ENCODE measurements at regions of chr22 and their contacts with region 1.

Region 1: GRCh38 chr22:50562523-50563412 is at the start of gene SYCE3:
- DNase-seq: peak; percentile 98
- H3K4me3 Mint-ChIP-seq: peak within 1 kb of the TSS; percentile 90
- H3K27ac Mint-ChIP-seq: peak within 1 kb of the TSS; percentile 60
- H3K4me1 Mint-ChIP-seq: peaks cover 15% of the 10 kb centered on the region
- H3K27me3 Mint-ChIP-seq: no peaks in the 10 kb centered on the region
- total RNA-seq, gene SYCE3: 0.87 to 1.0 TPM

Region 2: DNA sequence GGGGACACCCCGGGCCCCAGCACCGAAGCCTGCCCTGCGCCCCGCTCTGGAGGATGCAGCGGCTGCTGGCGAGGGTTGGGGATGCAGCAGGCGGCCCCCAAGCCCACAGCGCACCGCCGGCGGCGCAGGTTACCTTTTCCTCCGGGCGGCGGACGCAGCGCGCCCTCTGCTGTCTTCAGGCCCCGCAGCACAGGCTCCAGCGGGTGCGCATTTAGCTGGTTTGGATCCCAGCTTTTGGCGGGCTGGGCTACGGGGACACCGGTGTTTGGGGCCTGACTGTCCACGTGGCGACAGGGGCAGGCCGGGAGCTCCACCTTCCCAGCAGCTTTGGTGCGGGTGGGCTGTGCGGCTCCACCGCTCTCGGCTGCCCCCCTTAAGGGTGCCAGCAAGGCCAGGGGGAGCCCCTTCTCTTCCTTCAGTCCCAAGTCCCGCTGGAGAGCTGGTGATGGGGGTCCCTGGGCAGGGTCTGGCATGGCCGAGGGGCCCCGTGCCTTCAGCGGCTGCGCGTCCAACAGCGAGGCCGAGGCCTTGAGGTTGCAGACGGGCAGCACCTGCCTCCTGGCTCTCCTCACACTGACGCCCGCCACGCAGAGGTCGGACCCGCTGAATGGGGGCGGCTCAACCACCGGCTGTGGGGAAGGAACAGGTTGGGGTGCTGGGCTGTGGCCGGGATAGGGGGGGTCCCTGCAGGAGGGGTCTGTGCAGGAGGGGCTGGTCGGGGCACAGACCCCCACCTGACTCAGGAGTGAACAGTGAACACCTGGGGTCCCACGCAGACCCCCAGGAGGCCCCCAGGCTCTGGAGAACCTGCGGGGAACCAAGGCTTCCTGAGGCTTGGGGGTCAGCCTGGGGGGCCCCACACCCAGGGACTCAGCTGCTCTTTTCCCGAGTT is 532.2 kb before region 1 on chr22:
- CTCF ChIA-PET with region 1: no interaction called
- POLR2A ChIA-PET with region 1: no interaction called
- intact Hi-C with region 1: no loop called
- DNase-seq: peak; percentile 94
- H3K4me3 Mint-ChIP-seq: no peak overlapping the region
- H3K27ac Mint-ChIP-seq: no peak overlapping the region
- H3K4me1 Mint-ChIP-seq: peaks cover 25% of the 10 kb centered on the region
- H3K27me3 Mint-ChIP-seq: peaks cover 16% of the 10 kb centered on the region

Region 3: GRCh38 chr22:50406416-50407170 is 156.2 kb before region 1 on chr22:
- CTCF ChIA-PET with region 1: no interaction called
- POLR2A ChIA-PET with region 1: no interaction called
- intact Hi-C with region 1: no loop called
- DNase-seq: no peak
- H3K4me3 Mint-ChIP-seq: no peak overlapping the region
- H3K27ac Mint-ChIP-seq: peak overlapping the region; percentile 32
- H3K4me1 Mint-ChIP-seq: no peaks in the 10 kb centered on the region
- H3K27me3 Mint-ChIP-seq: no peaks in the 10 kb centered on the region

Region 4: GRCh38 chr22:50507991-50508884 is 54.5 kb before region 1 on chr22 and contains the start of gene NCAPH2:
- CTCF ChIA-PET with region 1: interaction called, 6 read pairs
- POLR2A ChIA-PET with region 1: interaction called, 3 read pairs
- intact Hi-C with region 1: loop called (anchors 1 kb)
- DNase-seq: peak; percentile 99
- H3K4me3 Mint-ChIP-seq: peak within 1 kb of the TSS; percentile 97
- H3K27ac Mint-ChIP-seq: peak within 1 kb of the TSS; percentile 97
- H3K4me1 Mint-ChIP-seq: peaks cover 20% of the 10 kb centered on the region
- H3K27me3 Mint-ChIP-seq: no peaks in the 10 kb centered on the region
- total RNA-seq, gene NCAPH2: 134 to 138 TPM

Region 5: GRCh38 chr22:50530877-50531545 is 31.8 kb before region 1 on chr22:
- CTCF ChIA-PET with region 1: interaction called, 71 read pairs
- POLR2A ChIA-PET with region 1: interaction called, 29 read pairs
- intact Hi-C with region 1: loop called (anchors 1 kb)
- DNase-seq: peak; percentile 92
- H3K4me3 Mint-ChIP-seq: peak overlapping the region; percentile 92
- H3K27ac Mint-ChIP-seq: peak overlapping the region; percentile 99
- H3K4me1 Mint-ChIP-seq: peaks cover 54% of the 10 kb centered on the region
- H3K27me3 Mint-ChIP-seq: no peaks in the 10 kb centered on the region

Region 6: GRCh38 chr22:50544078-50544745 is 18.6 kb before region 1 on chr22:
- CTCF ChIA-PET with region 1: interaction called, 46 read pairs
- POLR2A ChIA-PET with region 1: interaction called, 13 read pairs
- intact Hi-C with region 1: loop called (anchors 1 kb)
- DNase-seq: peak; percentile 92
- H3K4me3 Mint-ChIP-seq: peak overlapping the region; percentile 59
- H3K27ac Mint-ChIP-seq: peak overlapping the region; percentile 76
- H3K4me1 Mint-ChIP-seq: peaks cover 57% of the 10 kb centered on the region
- H3K27me3 Mint-ChIP-seq: no peaks in the 10 kb centered on the region

Region 7: GRCh38 chr22:50582562-50583293 is 20.0 kb after region 1 on chr22 and contains the start of gene CHKB:
- CTCF ChIA-PET with region 1: interaction called, 7 read pairs
- POLR2A ChIA-PET with region 1: interaction called, 9 read pairs
- intact Hi-C with region 1: loop called (anchors 1 kb)
- DNase-seq: peak; percentile 99
- H3K4me3 Mint-ChIP-seq: peak within 1 kb of the TSS; percentile 94
- H3K27ac Mint-ChIP-seq: peak within 1 kb of the TSS; percentile 87
- H3K4me1 Mint-ChIP-seq: peaks cover 21% of the 10 kb centered on the region
- H3K27me3 Mint-ChIP-seq: no peaks in the 10 kb centered on the region
- total RNA-seq, gene CHKB: 76.2 to 76.3 TPM

Region 8: GRCh38 chr22:50674606-50675549 is 112.1 kb after region 1 on chr22:
- CTCF ChIA-PET with region 1: no interaction called
- POLR2A ChIA-PET with region 1: no interaction called
- intact Hi-C with region 1: no loop called
- DNase-seq: no peak
- H3K4me3 Mint-ChIP-seq: peak overlapping the region; percentile 1
- H3K27ac Mint-ChIP-seq: no peak overlapping the region
- H3K4me1 Mint-ChIP-seq: peaks cover 11% of the 10 kb centered on the region
- H3K27me3 Mint-ChIP-seq: peaks cover 39% of the 10 kb centered on the region

Measured in activated CD4-positive, alpha-beta memory T cell treated with anti-CD3 and anti-CD28 coated beads for 36 hours (primary cell).